Activated T-helper 1 cell treated with anti-CD3 and anti-CD28 coated beads, Interleukin-12 subunit alpha, Interleukin-12 subunit beta, Interleukin-2, Interleukin-4 antibody, amounts not matched to agents 30 ng/mL and 10 ng/mL and 1 ng/mL, durations not matched to agents 14 hours and 24 hours and 36 hours (primary cell): ENCODE measurements at regions of chr4 and their contacts with region 1.

Region 1: DNA sequence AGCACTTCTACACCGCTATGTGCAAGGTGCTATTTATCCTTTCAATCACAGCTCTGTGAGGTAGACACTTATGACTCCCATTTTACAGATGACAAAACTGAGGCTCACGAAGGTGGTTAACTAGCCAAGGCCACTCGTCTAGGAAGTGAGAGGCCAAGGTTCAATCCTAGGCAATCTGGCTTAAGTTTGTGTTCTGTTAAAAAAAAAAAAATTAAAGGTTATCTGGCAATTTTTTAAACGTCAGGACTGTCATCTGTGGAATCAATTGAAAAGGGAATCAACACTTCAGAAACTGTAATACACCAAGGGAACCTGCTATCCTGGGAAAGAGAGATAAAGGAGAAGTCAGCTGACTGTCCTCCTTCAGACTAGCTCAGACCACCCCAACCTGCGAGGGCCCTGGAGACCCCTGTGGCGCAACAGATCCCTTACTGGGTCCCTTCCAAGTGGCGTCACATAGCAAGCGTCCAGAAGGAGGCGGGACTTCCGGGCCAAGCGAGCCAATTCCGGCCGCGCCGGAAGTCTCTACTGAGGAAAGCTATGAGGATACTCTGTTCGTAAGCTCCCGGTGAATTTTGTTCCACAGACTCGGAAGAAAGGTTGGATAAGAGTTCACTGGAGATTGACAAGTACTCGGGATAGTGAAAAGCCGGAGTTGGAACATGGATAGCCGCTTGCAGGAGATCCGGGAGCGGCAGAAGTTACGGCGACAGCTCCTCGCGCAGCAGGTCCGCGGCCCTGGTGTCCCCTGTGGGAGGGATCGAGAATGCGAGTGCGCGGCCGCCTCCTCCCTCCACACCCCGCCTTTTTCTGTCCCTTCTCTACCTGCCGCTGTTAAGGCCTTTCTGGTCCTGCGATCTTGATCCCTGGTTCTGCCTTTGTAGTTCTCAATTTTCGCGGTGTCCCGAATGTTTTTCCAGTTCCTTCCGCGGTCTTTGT is at the start of gene METTL14:
- DNase-seq: peak; percentile 83
- H3K4me3 Mint-ChIP-seq: peak within 1 kb of the TSS; percentile 97
- H3K27ac Mint-ChIP-seq: peak within 1 kb of the TSS; percentile 88
- H3K4me1 Mint-ChIP-seq: peaks cover 28% of the 10 kb centered on the region
- H3K27me3 Mint-ChIP-seq: no peaks in the 10 kb centered on the region
- total RNA-seq, gene METTL14: 44.6 and 48.3 TPM in 2 replicates

Region 2: DNA sequence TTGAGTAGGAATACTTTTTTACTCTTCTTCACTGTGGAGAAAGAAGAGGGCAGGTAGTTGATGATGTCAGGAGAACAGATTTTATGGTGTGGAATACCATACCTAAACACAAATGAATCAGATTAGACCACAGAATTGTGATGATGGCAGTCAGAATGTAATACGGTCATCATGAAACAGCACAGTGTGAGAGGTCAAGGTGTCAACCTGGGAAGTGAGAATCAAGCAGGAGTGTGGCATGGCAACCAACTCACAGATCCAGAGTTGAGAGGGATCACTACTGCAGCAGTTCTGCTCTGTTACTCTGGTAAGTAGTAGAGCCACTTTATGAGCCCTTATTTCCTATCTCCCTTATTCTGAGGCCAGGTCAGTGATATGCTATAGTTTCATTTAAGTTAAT is 27.7 kb after region 1 on chr4:
- intact Hi-C with region 1: loop called (anchors 2 kb)
- DNase-seq: no peak
- H3K4me3 Mint-ChIP-seq: no peak overlapping the region
- H3K27ac Mint-ChIP-seq: no peak overlapping the region
- H3K4me1 Mint-ChIP-seq: peaks cover 10% of the 10 kb centered on the region
- H3K27me3 Mint-ChIP-seq: no peaks in the 10 kb centered on the region

Region 3: GRCh38 chr4:119300101-119300978 is 615.2 kb after region 1 on chr4:
- intact Hi-C with region 1: loop called (anchors 1 kb)
- DNase-seq: peak; percentile 93
- H3K4me3 Mint-ChIP-seq: peak overlapping the region; percentile 97
- H3K27ac Mint-ChIP-seq: peak overlapping the region; percentile 97
- H3K4me1 Mint-ChIP-seq: peaks cover 38% of the 10 kb centered on the region
- H3K27me3 Mint-ChIP-seq: no peaks in the 10 kb centered on the region